ENCODE measurements at regions of chr9 and their contacts with region 1.

Region 1: GRCh38 chr9:73149371-73150067 is 2.1 kb upstream of the ANXA1 start:
- DNase-seq: peak; percentile 76
- H3K4me3 Mint-ChIP-seq: peak overlapping the region; percentile 65
- H3K27ac Mint-ChIP-seq: peak overlapping the region; percentile 89
- H3K4me1 Mint-ChIP-seq: peaks cover 54% of the 10 kb centered on the region
- H3K27me3 Mint-ChIP-seq: no peaks in the 10 kb centered on the region

Region 2: DNA sequence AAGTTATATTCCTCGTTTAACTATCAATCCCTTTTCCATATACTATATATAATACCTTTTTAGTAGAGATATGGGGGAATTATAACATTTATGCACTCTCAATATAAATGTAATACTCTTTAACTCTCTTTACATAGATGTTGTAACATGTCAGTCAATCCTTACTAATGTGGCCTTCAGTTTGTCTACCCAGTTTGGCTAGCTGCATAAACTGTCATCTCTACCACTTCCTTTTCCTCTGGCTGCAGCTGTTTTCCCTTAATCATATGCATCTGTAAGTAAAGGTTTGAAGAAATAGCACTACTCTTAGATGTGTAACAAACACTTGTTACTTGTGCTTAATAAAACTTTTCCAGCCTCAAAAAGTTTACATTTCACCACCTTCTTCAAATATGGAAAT is 1251.9 kb before region 1 on chr9:
- intact Hi-C with region 1: loop called (anchors 10 kb)
- DNase-seq: peak; percentile 80
- H3K4me3 Mint-ChIP-seq: peak overlapping the region; percentile 49
- H3K27ac Mint-ChIP-seq: peak overlapping the region; percentile 42
- H3K4me1 Mint-ChIP-seq: peaks cover 72% of the 10 kb centered on the region
- H3K27me3 Mint-ChIP-seq: no peaks in the 10 kb centered on the region

Region 3: DNA sequence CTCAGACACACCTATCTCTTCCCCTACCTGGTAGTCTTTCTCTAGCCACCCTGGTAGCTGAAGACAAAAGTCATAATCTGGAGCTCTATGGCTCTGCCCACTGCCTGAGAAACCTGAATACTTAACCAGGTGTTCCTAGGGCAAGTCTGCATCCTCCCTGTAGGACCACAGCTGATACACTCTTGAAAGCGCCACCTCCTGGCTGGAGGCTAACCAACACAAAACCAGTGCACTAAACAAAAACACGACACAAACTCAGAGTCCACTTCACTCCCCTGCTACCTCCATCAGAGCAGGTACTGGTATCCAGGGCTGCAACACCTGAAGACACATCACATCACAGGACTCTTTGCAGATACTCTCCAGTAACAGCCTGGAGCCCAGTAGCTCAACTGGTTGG is 82.4 kb before region 1 on chr9:
- intact Hi-C with region 1: no loop called
- DNase-seq: no peak
- H3K4me3 Mint-ChIP-seq: no peak overlapping the region
- H3K27ac Mint-ChIP-seq: no peak overlapping the region
- H3K4me1 Mint-ChIP-seq: no peaks in the 10 kb centered on the region
- H3K27me3 Mint-ChIP-seq: peaks cover 17% of the 10 kb centered on the region

Region 4: DNA sequence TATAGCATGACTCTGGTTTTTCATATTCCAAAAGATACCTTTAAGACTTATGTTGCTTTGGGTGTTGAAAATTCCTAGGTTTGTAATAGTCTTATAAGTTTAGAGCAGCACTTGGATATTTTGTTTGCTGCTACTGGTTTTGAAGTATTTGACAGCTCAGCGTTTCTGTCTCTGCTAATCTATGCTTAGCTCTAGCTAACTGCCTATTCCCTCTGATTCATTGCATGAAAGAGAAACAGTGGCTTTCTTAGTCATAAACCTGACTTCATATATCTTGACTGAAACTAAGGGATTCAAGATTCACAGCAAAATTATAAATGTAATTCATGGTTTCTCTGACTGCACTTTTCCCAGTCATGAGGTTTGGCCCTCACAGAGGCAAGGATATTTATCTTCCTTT is 33.5 kb before region 1 on chr9:
- intact Hi-C with region 1: loop called (anchors 1 kb)
- DNase-seq: no peak
- H3K4me3 Mint-ChIP-seq: no peak overlapping the region
- H3K27ac Mint-ChIP-seq: no peak overlapping the region
- H3K4me1 Mint-ChIP-seq: peaks cover 28% of the 10 kb centered on the region
- H3K27me3 Mint-ChIP-seq: peaks cover 2% of the 10 kb centered on the region

Region 5: DNA sequence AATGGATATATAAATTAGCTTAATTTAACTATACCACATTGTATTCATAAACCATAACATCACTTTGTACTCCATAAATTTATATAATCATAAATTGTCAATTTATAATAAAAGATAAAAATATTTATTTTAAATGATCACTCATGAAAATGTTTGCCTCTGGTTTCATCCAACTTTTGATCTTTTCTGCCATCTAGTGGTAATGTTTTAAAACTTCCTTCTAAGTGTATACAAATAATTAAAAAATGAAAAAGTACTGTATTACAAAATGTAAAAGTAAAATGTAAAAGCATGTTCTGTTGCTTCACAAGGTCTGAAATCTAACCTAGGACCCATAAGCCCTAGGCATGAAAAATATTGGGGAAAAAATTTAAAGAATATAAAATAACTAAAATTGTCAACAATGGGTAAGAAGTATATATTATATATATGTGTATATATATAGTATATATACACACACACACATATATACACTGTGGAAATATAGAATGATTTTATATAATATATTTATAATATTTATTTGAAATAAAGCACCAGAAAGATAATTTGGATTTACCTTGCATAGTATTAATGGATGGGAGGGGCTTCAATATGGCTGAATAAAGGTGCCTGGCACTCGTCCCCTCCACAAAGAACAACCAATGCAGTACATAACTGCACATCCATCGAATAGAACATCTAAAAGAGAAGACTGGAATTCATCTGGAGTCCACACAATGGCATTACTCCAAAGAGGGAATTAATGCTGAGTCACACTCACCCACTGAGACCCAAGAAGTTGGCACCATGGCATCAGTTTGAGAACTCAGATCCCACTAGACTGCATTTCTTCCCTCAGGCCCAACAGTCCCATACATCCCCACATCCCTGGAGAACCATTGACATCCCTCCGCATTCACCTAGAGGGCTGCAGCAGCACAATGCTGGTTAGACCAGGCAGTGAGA is 34.7 kb after region 1 on chr9:
- intact Hi-C with region 1: loop called (anchors 2 kb)
- DNase-seq: no peak
- H3K4me3 Mint-ChIP-seq: no peak overlapping the region
- H3K27ac Mint-ChIP-seq: no peak overlapping the region
- H3K4me1 Mint-ChIP-seq: peaks cover 5% of the 10 kb centered on the region
- H3K27me3 Mint-ChIP-seq: peaks cover 33% of the 10 kb centered on the region

Region 6: GRCh38 chr9:74952281-74953151 is 1803.0 kb after region 1 on chr9 and contains the start of gene C9orf40:
- intact Hi-C with region 1: loop called (anchors 2 kb)
- DNase-seq: peak; percentile 97
- H3K4me3 Mint-ChIP-seq: peak within 1 kb of the TSS; percentile 98
- H3K27ac Mint-ChIP-seq: peak within 1 kb of the TSS; percentile 97
- H3K4me1 Mint-ChIP-seq: peaks cover 39% of the 10 kb centered on the region
- H3K27me3 Mint-ChIP-seq: no peaks in the 10 kb centered on the region
- total RNA-seq, gene C9orf40: 19.6 and 20.0 TPM in 2 replicates